PC-9 (cell line): ENCODE measurements at regions of chr1 and their contacts with region 1.

Region 1: DNA sequence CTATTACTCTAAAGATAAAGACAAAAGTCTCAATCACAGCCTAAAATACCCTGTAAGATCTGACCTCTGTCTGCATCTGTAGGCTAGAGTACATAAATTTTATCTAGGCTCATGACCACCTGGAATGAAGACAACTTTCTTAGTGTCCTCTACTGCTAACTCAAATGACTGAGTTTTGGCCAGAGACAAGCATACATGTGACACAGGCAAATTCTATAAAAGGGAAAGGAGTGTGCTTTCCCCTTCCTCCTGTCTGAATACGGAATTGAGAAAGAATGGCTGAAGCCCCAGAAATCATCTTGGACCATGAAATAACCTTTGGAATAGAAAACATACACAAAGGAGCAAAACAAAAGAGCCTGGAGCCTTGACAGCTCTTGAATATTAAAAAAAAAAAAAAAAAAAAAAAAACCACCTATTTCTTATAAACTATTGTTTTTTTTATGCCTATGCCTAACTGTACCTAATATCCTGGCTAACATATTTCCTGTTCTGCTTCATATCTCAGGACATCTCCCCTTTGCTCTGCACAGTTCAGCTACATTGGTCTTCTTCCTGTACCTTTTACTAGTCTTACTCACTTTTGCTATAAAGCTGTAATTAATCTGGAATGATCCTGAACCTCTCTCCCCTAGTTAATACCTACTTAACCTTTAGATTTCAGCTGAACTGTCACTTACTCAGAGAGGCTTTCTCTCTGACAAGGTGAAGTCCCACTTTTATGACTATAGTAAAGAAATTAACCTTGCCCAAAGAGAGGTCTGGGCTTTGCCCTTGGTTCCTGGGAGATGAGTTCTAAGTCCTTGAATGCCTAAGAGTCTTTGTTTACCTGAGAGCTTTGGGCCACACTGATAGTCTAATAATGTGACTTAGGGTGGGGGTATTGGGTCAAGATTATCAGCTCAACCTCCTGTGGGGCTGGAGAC is 16.1 kb downstream of the UCHL5 start:
- DNase-seq: no peak
- H3K4me3 ChIP-seq: no peak overlapping the region
- H3K27ac ChIP-seq: no peak overlapping the region
- H3K4me1 ChIP-seq: no peaks in the 10 kb centered on the region
- H3K27me3 ChIP-seq: no peaks in the 10 kb centered on the region
- CTCF ChIP-seq: no peak

Region 2: DNA sequence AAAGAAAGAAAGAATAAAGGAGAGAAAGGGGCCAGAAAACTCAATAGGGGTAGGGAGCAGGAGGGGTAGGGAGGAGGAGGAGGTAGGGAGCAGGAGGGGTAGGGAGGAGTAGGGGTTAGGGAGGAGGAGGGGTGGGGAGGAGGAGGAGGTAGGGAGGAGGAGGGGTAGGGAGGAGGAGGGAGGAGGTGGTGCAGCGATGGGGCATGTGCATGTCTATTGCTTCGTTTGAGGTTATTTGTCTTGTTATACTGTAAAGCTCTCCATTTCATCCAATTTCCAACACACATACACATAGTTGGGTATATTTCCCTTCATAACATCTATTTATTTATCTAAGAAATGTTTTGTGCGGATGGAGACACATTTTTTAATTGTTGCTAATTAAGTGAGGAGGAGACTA is 447.7 kb before region 1 on chr1:
- CTCF ChIA-PET with region 1: interaction called, 14 read pairs
- POLR2A ChIA-PET with region 1: no interaction called
- intact Hi-C with region 1: no loop called
- DNase-seq: no peak
- H3K4me3 ChIP-seq: no peak overlapping the region
- H3K27ac ChIP-seq: no peak overlapping the region
- H3K4me1 ChIP-seq: no peaks in the 10 kb centered on the region
- H3K27me3 ChIP-seq: no peaks in the 10 kb centered on the region
- CTCF ChIP-seq: no peak

Region 3: GRCh38 chr1:193059268-193060225 is 16.5 kb after region 1 on chr1 and contains the starts of genes RO60 and UCHL5:
- CTCF ChIA-PET with region 1: no interaction called
- POLR2A ChIA-PET with region 1: no interaction called
- intact Hi-C with region 1: no loop called
- DNase-seq: peak; percentile 96
- H3K4me3 ChIP-seq: peak within 1 kb of the TSS; percentile 78
- H3K27ac ChIP-seq: peak within 1 kb of the TSS; percentile 92
- H3K4me1 ChIP-seq: peaks cover 23% of the 10 kb centered on the region
- H3K27me3 ChIP-seq: no peaks in the 10 kb centered on the region
- CTCF ChIP-seq: no peak
- total RNA-seq, gene RO60: 40.4 and 49.2 TPM in 2 replicates
- total RNA-seq, gene UCHL5: 37.0 and 49.3 TPM in 2 replicates